ENCODE measurements at regions of chr7 and their contacts with region 1.

Region 1: DNA sequence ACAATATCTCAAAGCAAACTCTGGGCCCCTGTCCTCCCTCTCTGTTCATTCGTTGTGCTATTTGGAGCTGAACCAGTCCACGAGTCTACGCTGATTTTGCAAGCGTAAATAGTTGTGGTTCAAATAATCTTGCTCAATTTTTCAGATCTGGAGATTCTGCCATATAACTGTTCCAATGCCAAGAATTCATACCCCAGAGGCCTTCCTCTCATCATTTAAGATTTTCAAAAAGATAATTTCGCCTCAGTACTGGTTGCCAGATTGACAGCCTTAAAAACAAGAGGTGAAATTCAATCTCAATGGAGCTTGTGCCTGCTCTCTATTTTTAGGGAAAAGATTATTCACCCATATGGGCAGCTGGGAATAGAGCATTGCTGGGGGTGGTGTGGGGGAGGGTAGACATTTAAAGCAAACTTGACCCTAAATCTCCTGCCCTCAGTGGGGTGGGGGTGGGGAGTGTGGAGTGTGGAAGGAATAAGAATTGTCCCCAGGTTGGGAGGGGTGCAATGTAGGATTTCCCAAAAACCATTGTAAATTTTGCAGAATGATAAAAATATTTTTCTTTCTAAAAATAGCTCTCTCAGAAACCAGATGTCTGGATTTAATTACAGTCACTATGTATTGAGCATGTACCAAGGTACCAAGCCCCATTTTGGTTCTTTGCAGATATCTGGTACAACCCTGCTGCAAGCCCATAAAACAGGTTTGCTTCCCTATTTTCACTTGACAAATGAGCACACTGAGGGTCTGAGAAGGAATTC is 104.7 kb upstream of the EEPD1 start:
- DNase-seq: peak; percentile 39 to 57
- ATAC-seq: peak; percentile 90 to 93 (median 92)
- H3K4me3 ChIP-seq: peak overlapping the region; percentile 1
- H3K27ac ChIP-seq: peak overlapping the region; percentile 75
- H3K4me1 ChIP-seq: peaks cover 52% of the 10 kb centered on the region
- H3K27me3 ChIP-seq: no peaks in the 10 kb centered on the region
- CTCF ChIP-seq: no peak

Region 2: GRCh38 chr7:36096460-36097095 is 48.3 kb after region 1 on chr7:
- intact Hi-C with region 1: loop called in 1 of 2 experiments (anchors 5 kb)
- DNase-seq: no peak
- ATAC-seq: peak; percentile 58 to 86 (median 72)
- H3K4me3 ChIP-seq: no peak overlapping the region
- H3K27ac ChIP-seq: no peak overlapping the region
- H3K4me1 ChIP-seq: peaks cover 9% of the 10 kb centered on the region
- H3K27me3 ChIP-seq: no peaks in the 10 kb centered on the region
- CTCF ChIP-seq: no peak

Region 3: GRCh38 chr7:36115448-36116321 is 67.4 kb after region 1 on chr7:
- intact Hi-C with region 1: loop called in 1 of 2 experiments (anchors 5 kb)
- DNase-seq: peak; percentile 85
- ATAC-seq: peak; percentile 72 to 94 (median 88)
- H3K4me3 ChIP-seq: no peak overlapping the region
- H3K27ac ChIP-seq: peak overlapping the region; percentile 79
- H3K4me1 ChIP-seq: peaks cover 36% of the 10 kb centered on the region
- H3K27me3 ChIP-seq: no peaks in the 10 kb centered on the region
- CTCF ChIP-seq: no peak

Measured in psoas muscle (tissue), 8 donors.